HEK293T (cell line): ENCODE measurements at regions of chr7 and their contacts with region 1.

Region 1: GRCh38 chr7:140451716-140452115 is 27.6 kb downstream of the MKRN1 start:
- DNase-seq: no peak

Region 2: GRCh38 chr7:140284062-140284461 is 167.7 kb before region 1 on chr7:
- CTCF ChIA-PET with region 1: no interaction called
- POLR2A ChIA-PET with region 1: no interaction called
- DNase-seq: no peak

Region 3: GRCh38 chr7:140439359-140439758 is 12.4 kb before region 1 on chr7:
- CTCF ChIA-PET with region 1: interaction called, 10 read pairs
- POLR2A ChIA-PET with region 1: interaction called, 3 read pairs
- DNase-seq: no peak

Region 4: DNA sequence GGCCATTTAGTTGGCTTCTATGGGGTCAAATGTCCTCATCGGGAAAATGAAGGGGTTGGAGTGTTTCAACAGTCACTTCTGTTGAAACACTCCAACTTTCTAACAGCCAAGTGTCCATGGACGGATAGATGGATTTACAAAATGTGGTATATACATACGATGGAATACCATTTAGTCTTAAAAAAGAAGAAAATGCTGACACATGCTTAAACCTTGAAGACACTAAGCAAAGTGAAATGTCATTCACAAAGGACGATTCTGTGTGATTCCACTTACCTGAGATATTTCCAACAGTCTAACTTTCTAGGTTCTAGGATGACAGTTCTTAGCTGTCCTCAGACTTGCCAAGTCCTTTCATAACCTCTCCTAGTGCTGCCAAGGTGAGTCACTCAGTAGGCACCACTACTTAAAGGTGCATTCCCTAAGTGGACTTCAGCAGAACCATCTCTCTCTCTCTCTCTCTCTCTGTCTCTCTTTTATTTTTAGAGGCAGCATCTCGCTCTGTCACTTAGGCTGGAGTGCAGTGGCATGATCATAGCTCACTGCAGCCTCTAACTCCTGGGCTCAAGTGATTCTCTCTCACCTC is 119.9 kb after region 1 on chr7:
- CTCF ChIA-PET with region 1: no interaction called
- POLR2A ChIA-PET with region 1: no interaction called
- DNase-seq: no peak